ENCODE measurements at regions of chr10 and their contacts with region 1.

Region 1: DNA sequence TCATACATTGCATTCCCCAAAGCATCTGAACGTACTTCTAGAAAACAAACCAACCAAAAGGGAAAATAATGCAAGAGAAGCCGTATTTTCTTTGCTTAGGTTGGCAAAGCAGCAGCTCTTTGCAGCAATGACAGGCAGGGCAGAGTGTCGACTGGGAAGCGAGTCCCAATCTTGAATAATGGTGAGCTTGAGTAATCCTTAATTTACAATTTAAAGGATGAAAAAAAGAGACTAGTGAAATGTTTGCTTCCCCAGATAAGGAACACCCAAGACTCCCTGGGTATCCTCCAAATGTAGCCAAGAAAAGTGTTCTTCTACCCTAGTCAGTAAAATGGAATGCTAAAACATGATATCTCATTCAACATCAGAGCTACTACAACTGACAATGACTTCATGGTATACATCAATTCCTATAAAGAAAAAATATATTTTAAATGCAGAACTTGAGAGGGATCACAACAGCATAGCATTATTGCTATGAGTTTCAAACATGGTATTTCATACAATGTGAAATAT is 32.0 kb downstream of the GPAM start:
- DNase-seq: peak; percentile 55
- ATAC-seq: peak; percentile 64
- H3K4me3 ChIP-seq: no peak overlapping the region
- H3K27ac ChIP-seq: no peak overlapping the region
- H3K4me1 ChIP-seq: no peaks in the 10 kb centered on the region
- H3K27me3 ChIP-seq: no peaks in the 10 kb centered on the region
- CTCF ChIP-seq: no peak
- POLR2A ChIP-seq: no peak
- RAD21 ChIP-seq: no peak

Region 2: DNA sequence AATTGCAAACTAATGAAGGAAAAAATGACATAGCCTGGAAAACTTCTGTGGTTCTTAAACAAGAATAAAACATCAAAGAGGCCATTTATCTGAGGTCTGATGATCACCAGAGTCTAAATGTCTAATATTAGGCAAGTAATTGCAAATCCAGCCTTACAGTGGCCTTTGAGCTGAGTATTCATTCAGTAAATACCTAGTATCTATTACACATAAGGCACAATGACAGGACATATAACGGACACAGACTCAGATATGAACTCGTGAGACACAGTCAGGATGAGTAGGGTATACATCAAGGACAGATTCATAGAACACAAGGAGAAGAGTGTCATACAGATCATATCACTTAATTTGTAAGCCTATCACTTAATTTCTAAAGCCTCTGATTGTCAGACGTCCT is 15.2 kb after region 1 on chr10:
- CTCF ChIA-PET with region 1: no interaction called
- POLR2A ChIA-PET with region 1: no interaction called
- dilution Hi-C with region 1: no loop called
- in situ Hi-C with region 1: no loop called
- intact Hi-C with region 1: loop called (anchors 1 kb)
- DNase-seq: no peak
- ATAC-seq: no peak
- H3K4me3 ChIP-seq: no peak overlapping the region
- H3K27ac ChIP-seq: no peak overlapping the region
- H3K4me1 ChIP-seq: no peaks in the 10 kb centered on the region
- H3K27me3 ChIP-seq: no peaks in the 10 kb centered on the region
- CTCF ChIP-seq: no peak
- POLR2A ChIP-seq: no peak
- RAD21 ChIP-seq: no peak